Spleen (tissue), 13 donors: ENCODE measurements at regions of chr12 and their contacts with region 1.

Region 1: DNA sequence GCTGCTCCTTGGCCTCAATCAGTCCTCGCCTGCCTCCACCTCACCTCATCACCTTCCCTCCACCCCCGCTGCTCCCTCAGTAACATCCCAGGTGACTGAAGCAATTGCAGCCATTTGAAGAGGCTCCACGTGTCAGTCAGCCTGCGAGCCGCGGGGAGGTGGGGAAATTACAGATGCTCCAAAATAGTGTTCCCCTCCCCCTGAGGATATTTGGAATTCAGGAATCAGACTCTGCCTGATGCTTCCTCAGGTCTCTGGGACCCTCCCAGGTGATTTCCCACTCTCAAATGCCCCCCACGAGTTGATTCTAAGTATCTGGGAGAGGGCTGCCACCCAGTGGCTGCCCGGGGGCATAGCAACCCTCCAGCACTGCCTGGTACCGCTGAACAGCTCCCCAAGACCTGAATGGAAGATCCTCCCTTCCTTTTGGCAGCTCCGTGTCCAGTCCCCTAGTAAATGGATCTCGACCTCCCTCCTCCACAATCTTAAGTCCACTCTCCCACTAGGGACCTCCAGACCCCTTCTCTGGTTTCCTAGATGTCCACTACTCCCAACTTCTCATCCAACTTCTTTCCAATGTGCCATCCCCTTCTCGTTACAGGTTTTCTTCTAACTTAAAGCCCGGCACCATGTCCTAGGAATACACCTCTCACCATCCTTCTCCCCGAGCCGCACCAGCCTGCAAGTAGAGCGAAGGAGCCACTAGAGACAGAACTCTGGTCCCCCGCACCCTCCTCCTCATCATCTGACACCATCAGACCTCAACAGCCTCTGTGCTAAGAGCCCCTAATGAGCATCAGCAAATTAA is 1.4 kb upstream of the ASIC1 start:
- DNase-seq: no peak
- H3K4me3 ChIP-seq: peak overlapping the region in 1 of 8 donors; percentile 80
- H3K27ac ChIP-seq: no peak overlapping the region
- H3K4me1 ChIP-seq: peaks cover 7 to 45% (median 27%) of the 10 kb centered on the region in 6 donors
- H3K27me3 ChIP-seq: peaks cover 0 to 95% (median 34%) of the 10 kb centered on the region in 7 donors
- CTCF ChIP-seq: peak; percentile 76 to 98 (median 94)
- POLR2A ChIP-seq: no peak

Region 2: DNA sequence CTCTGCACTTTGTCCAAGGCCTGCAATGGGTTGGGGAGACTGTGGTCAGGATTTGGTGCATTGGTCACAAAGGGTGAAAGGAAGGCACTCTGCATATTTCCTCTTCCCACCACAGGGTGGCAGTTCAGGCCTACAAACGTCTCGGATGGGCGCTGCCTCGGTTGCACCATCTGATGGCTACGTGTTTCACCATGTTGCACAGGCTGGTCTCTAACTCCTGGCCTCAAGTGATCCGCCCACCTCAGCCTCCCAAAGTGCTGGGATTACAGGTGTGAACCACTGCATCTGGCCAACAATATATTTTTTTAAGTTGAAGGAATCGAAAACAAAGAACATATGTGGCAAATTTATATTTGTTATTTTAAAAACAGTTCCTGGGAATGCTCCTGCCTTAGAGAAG is 279.6 kb before region 1 on chr12:
- intact Hi-C with region 1: loop called (anchors 10 kb)
- DNase-seq: peak; percentile 83
- H3K4me3 ChIP-seq: peak overlapping the region in 1 of 8 donors; percentile 4
- H3K27ac ChIP-seq: no peak overlapping the region
- H3K4me1 ChIP-seq: peaks cover 0 to 22% (median 13%) of the 10 kb centered on the region in 6 donors
- H3K27me3 ChIP-seq: peaks cover 0 to 48% (median 10%) of the 10 kb centered on the region in 7 donors
- CTCF ChIP-seq: peak; percentile 49 to 87 (median 73)
- POLR2A ChIP-seq: no peak

Region 3: GRCh38 chr12:49967042-49967776 is 88.8 kb before region 1 on chr12:
- intact Hi-C with region 1: loop called (anchors 5 kb)
- DNase-seq: peak; percentile 98
- H3K4me3 ChIP-seq: peak overlapping the region; percentile 1 to 72 (median 34)
- H3K27ac ChIP-seq: no peak overlapping the region
- H3K4me1 ChIP-seq: peaks cover 7 to 24% (median 13%) of the 10 kb centered on the region in 6 donors
- H3K27me3 ChIP-seq: peaks cover 0 to 94% (median 19%) of the 10 kb centered on the region in 7 donors
- CTCF ChIP-seq: peak; percentile 87 to 97 (median 93)
- POLR2A ChIP-seq: no peak

Region 4: DNA sequence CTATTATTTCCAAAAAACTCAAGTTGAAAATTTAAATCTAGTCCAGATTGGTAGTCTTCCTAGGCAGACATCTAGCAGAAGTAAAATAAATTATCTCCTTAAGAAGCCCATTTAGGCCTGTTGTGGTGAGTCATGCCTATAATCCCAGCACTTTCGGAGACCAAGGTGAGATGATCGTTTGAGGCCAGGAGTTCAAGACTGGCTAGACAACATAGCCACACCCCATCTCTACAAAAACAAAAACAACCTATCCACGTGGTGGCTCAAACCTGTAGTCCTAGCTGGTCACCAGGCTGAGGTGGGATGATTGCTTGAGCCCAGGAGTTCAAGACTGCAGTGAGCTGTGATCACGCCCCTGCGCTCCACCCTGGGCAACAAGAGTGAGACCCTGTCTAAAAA is 363.5 kb after region 1 on chr12:
- intact Hi-C with region 1: no loop called
- DNase-seq: no peak
- H3K4me3 ChIP-seq: no peak overlapping the region
- H3K27ac ChIP-seq: no peak overlapping the region
- H3K4me1 ChIP-seq: peaks cover 0 to 52% (median 11%) of the 10 kb centered on the region in 6 donors
- H3K27me3 ChIP-seq: no peaks in the 10 kb centered on the region
- CTCF ChIP-seq: no peak
- POLR2A ChIP-seq: no peak